Activated CD4-positive, alpha-beta memory T cell treated with anti-CD3 and anti-CD28 coated beads for 36 hours (primary cell): ENCODE measurements at regions of chr1 and their contacts with region 1.

Region 1: GRCh38 chr1:183841950-183842794 is 37.3 kb downstream of the RGL1 start:
- DNase-seq: peak; percentile 51
- H3K4me3 Mint-ChIP-seq: peak overlapping the region; percentile 40
- H3K27ac Mint-ChIP-seq: peak overlapping the region; percentile 66
- H3K4me1 Mint-ChIP-seq: peaks cover 25% of the 10 kb centered on the region
- H3K27me3 Mint-ChIP-seq: no peaks in the 10 kb centered on the region

Region 2: GRCh38 chr1:183699616-183700160 is 142.5 kb before region 1 on chr1:
- CTCF ChIA-PET with region 1: no interaction called
- POLR2A ChIA-PET with region 1: no interaction called
- intact Hi-C with region 1: no loop called
- DNase-seq: no peak
- H3K4me3 Mint-ChIP-seq: no peak overlapping the region
- H3K27ac Mint-ChIP-seq: no peak overlapping the region
- H3K4me1 Mint-ChIP-seq: peaks cover 10% of the 10 kb centered on the region
- H3K27me3 Mint-ChIP-seq: no peaks in the 10 kb centered on the region

Region 3: DNA sequence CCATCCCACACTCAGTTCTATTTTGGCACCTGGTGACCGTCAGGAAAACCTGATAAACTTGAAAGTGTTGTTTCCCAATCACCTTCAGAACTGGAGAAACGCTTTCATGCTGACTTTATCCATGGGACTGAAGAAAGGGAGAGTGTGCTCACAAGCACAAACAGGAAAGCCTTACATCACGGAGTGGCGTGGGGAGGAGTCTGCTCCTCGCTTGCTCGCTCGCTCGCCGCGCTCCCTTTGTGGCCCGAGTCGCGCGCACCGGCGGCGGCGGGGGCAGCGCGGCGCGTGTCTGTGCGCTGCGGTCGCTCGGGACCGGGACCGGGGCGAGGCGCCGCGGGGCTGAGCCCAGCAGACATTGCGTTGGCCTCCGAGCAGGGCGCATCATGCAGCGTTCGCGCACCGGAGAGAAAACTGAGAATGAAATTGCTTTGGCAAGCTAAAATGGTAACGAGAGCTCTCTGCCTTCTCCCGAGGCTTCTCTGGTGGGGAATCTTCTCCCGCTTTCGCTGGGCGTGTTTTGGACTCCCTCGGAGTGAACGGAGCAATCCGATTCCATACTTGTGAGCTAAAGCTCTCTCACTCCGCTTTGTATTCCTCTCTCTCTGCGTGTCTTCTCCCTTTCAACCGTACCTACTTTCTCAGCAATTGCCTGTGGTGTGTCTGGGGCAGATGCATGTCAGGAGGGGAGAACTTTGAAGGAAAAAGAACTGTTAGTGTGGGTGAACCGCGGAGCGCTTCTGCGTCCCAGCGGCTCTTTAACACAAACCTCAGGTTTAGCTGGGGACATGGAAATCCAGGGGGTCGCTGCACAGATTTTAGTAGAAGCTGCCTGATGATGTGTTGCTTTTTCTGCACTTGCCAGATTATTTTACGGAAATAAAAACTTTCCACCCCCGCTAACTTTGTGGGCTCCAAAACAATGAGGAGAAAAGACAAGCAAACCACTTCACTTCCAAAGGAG is 37.0 kb before region 1 on chr1 and contains the start of gene RGL1:
- CTCF ChIA-PET with region 1: no interaction called
- POLR2A ChIA-PET with region 1: no interaction called
- intact Hi-C with region 1: loop called (anchors 5 kb)
- DNase-seq: peak; percentile 40
- H3K4me3 Mint-ChIP-seq: peak within 1 kb of the TSS; percentile 78
- H3K27ac Mint-ChIP-seq: no peak within 1 kb of the TSS
- H3K4me1 Mint-ChIP-seq: peaks cover 6% of the 10 kb centered on the region
- H3K27me3 Mint-ChIP-seq: peaks cover 3% of the 10 kb centered on the region
- total RNA-seq, gene RGL1: 1.8 TPM